ENCODE measurements at regions of chr9 and their contacts with region 1.

Region 1: DNA sequence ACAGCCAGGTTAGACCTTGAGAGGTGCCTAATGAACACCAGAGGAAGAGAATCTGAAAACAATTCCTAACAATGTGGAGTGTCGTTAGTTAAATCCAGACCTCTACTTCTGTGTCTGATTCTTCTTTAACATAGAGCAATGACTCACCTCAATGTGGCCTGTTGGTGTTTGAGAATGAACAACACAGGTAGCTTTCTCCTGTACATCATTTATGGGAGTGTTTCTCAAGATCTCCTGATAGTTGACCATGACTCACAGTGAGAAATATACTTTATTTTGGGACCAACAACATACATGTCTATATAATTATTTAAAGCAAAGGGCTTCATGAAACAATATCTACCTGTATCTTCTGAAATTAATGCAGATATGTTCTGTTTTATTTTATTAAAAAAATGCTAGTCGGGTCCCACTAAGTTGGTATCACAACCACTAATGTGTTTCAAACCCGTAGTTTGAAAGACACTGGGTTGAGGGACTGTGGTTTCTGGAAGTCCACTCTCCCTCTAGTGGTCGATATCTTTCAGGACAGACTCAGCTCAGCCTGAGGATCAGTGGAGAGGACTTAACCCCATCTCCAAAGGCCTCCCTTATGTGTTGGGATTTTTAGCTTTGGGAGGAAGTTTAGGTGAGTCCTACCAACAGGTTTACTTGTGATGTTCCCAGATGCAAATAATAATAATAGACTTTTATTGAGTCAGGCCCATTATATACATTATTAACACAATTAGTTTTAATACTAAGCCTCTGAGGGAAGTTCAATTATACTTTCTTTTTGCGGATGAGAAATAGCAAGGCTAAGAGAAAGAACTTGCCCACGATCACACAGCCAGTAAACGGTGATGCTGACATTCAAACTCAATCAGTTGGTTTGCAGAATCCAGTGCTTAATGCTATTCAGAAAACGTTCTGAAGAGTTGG is 70.0 kb upstream of the KLF9 start:
- DNase-seq: no peak
- ATAC-seq: peak; percentile 70 to 76 (median 72)
- H3K4me3 ChIP-seq: no peak overlapping the region
- H3K27ac ChIP-seq: peak overlapping the region; percentile 79
- H3K4me1 ChIP-seq: peaks cover 80% of the 10 kb centered on the region
- H3K27me3 ChIP-seq: no peaks in the 10 kb centered on the region
- CTCF ChIP-seq: peak; percentile 82

Region 2: DNA sequence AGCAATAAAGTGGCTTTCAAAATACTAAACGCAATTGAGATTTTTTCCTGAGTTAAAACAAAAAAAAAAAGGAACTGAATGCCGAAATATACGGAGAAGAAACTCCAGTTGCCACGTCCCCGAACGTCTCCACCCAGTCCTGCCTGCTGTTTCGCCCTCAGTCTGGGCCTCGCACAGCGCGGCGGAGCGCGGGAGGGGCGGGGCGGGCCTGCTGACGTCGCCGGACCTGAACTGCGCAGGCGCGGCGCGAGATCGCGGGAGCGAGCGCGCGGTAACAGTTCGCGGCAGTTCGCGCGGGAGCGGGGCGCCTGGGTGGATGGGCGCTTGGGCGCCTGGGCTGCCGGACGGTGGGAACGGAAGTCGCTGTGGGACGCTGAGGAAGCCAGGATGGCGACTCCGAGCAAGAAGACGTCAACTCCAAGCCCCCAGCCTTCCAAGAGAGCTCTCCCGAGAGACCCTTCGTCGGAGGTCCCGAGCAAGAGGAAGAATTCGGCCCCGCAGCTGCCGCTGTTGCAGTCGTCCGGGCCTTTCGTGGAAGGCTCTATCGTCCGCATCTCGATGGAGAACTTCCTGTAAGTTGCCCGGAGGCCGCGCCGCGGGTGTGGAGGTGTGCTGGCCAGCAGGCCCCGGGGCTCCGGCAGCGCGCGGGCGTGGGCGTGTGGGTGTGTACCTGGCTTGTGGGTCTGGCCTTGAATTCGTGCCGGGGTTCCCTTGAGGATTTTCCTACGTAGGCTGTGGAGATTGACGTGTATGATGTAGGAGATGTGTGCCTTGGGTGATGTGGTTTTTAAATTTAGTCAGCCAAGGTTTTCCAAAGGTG is 225.6 kb before region 1 on chr9 and contains the start of gene SMC5:
- intact Hi-C with region 1: loop called in 1 of 2 experiments (anchors 10 kb)
- DNase-seq: peak; percentile 92 to 95
- ATAC-seq: peak; percentile 92 to 94 (median 94)
- H3K4me3 ChIP-seq: peak within 1 kb of the TSS; percentile 78
- H3K27ac ChIP-seq: peak within 1 kb of the TSS; percentile 98
- H3K4me1 ChIP-seq: peaks cover 50% of the 10 kb centered on the region
- H3K27me3 ChIP-seq: no peaks in the 10 kb centered on the region
- CTCF ChIP-seq: no peak
- total RNA-seq, gene SMC5: 18.1 to 21.0 (median 19.9) TPM

Region 3: DNA sequence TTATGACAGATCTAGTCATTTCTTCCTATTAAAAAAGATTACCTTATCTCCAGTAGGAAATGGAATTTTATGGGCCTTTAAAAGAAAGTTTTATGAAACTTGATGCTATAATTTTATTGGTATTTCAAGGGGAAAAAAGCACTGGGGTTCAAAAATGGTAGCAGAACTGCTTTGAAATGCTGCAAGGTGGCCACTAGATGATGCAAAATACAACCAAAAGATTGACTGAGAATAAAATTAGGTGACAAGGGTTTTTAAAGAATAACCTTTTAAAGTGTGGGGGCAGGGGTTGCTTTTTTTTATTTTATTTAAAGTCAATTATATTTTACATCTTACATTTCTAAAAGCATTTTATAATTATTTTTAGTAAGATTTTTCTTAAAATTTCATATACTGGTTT is 131.7 kb before region 1 on chr9:
- intact Hi-C with region 1: loop called in 1 of 2 experiments (anchors 2 kb)
- DNase-seq: no peak
- ATAC-seq: peak in 2 of 4 donors; percentile 48 to 75
- H3K4me3 ChIP-seq: no peak overlapping the region
- H3K27ac ChIP-seq: no peak overlapping the region
- H3K4me1 ChIP-seq: peaks cover 10% of the 10 kb centered on the region
- H3K27me3 ChIP-seq: no peaks in the 10 kb centered on the region
- CTCF ChIP-seq: peak; percentile 66

Region 4: DNA sequence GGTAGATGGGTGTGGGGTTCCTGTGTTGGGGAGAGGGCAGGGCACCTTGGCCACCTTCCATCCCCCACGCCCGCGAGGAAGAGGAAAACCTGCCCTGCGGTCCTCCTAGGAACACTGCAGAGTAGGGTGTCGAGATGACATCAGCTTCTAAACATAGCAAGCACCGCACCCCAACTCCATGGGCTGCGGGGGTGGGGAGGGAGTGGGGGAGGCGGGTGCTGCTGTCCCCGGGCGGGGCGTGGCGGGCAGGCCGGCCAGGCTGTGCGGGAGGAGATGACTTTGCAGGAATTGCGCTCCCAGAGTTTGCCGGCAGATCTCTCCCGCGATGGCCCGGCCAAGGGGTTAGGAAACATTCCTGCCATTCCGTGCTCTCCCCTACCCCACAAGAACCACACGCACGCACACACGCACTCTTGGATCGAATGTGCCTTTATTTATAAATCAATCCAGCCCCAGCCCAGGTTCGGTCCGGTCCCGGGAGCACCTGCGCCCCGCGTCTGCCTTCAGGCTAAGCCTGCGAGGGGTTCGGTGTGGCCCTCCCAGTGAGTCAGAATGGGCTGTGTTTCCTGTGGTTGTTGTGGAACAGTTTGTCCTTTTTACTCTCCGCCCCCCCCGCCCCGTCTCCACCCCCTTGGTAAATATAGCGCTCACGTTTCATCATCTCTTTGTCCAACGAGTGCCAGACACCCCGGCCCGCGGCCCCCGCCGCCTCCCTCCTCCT is 64.8 kb before region 1 on chr9:
- intact Hi-C with region 1: loop called (anchors 1 kb)
- DNase-seq: peak; percentile 96 to 98
- ATAC-seq: peak; percentile 64 to 70 (median 66)
- H3K4me3 ChIP-seq: peak overlapping the region; percentile 76
- H3K27ac ChIP-seq: peak overlapping the region; percentile 100
- H3K4me1 ChIP-seq: peaks cover 65% of the 10 kb centered on the region
- H3K27me3 ChIP-seq: no peaks in the 10 kb centered on the region
- CTCF ChIP-seq: no peak

Region 5: DNA sequence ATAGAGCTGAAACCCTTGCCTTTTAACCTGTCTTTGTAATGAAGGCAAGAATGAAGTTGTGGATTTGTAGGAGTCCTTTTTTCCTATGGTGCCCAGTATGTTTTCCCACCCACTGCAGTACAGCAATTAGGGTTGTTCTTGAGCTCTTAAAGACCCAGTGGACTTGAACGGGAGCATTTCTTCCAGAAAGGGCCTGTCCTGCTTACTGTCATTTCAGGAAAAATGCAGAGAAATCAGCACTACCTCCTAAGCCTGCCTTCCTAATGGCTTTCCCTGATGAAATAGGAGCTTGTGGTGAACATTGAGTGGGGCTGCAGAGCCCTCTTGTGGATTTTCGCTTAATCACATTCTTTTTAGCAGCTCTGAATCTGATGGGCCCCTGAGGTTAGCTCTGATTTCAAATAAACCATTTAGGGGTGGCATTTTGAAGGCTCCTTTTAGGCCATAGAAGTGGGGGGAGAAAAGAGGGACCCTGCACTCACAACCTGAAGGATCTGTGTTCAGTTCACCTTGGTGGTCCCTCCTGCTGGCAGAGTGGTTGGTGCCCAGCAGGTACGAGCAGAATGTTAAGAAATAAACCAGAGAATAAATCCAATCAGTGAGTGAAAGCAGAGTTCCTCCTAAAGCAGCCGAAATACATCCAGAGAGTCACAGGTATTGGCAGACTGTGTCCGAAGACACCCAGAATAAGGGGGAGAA is 118.0 kb after region 1 on chr9:
- intact Hi-C with region 1: loop called (anchors 5 kb)
- DNase-seq: peak in 1 of 2 donors; percentile 59
- ATAC-seq: peak; percentile 73 to 85 (median 78)
- H3K4me3 ChIP-seq: peak overlapping the region; percentile 58
- H3K27ac ChIP-seq: peak overlapping the region; percentile 87
- H3K4me1 ChIP-seq: peaks cover 34% of the 10 kb centered on the region
- H3K27me3 ChIP-seq: no peaks in the 10 kb centered on the region
- CTCF ChIP-seq: peak; percentile 85

Region 6: GRCh38 chr9:71518045-71518827 is 1033.8 kb after region 1 on chr9:
- intact Hi-C with region 1: no loop called
- DNase-seq: no peak
- ATAC-seq: no peak
- H3K4me3 ChIP-seq: no peak overlapping the region
- H3K27ac ChIP-seq: no peak overlapping the region
- H3K4me1 ChIP-seq: no peaks in the 10 kb centered on the region
- H3K27me3 ChIP-seq: no peaks in the 10 kb centered on the region
- CTCF ChIP-seq: no peak